ENCODE measurements at regions of chr2 and their contacts with region 1.

Region 1: GRCh38 chr2:85132834-85133637 is at the start of gene TCF7L1:
- DNase-seq: peak in 41 of 42 donors; percentile 16 to 78 (median 61)

Region 2: DNA sequence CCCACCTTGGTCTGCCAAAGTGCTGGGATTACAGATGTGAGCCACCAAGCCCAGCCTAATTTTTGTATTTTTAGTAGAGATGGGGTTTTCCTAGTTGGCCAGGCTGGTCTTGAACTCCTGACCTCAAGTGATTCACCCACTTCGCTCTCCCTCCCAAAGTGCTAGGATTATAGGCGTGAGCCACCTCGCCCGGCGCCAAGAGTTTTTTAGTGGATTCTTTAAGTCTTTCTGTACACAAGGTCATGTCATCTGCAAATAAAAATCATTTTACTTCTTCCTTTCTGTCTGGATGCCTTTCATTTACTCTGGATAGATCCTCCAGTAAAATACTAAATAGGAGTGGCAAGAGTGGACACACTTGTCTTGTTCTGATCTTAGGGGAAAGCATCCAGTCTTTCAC is 100.4 kb before region 1 on chr2:
- intact Hi-C with region 1: no loop called
- DNase-seq: no peak

Region 3: GRCh38 chr2:85273738-85274731 is 141.0 kb after region 1 on chr2:
- intact Hi-C with region 1: loop called (anchors 10 kb)
- DNase-seq: no peak